Vagina (tissue), 2 donors: ENCODE measurements at regions of chr20 and their contacts with region 1.

Region 1: DNA sequence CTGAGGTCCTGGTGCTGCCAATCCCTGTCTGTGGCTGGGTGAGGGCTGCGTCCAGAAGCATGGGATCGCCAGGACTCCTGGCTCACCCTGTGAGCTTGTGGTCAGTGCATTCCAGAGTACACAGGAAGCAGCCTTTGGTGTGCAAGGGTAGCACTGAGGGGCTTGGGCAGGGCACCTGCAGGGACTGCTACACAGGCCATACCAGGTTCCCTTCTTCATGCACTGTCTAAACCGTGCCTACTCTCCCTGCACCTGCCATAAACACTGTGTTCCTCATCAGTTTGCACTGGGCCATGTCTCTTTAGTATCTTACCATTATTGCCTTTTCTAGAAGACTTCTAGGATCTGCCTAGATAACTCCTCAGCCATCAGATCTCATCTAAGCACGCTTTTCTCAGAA is 72.8 kb upstream of the NKX2-2 start:
- DNase-seq: no peak
- H3K4me3 ChIP-seq: no peak overlapping the region
- H3K27ac ChIP-seq: no peak overlapping the region
- H3K4me1 ChIP-seq: no peaks in the 10 kb centered on the region
- H3K27me3 ChIP-seq: no peaks in the 10 kb centered on the region
- CTCF ChIP-seq: no peak
- POLR2A ChIP-seq: no peak

Region 2: DNA sequence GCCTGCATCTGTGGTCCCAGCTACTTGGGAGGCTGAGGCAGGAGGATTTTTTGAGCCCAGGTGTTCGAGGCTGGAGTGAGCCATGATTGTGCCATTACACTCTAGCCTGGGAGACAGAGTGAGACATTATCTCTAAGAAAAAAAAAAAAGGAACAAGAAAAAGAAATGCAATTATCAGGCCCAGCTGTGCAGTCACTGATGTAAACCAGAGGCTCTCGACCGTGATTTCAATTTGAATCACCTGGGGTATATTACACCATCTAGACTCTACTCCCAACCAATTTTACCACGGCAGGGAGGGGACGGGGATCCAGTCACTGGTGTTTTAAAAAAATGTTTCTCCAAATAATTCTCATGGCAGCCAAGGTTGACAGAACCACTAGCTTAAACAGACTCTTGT is 24.0 kb before region 1 on chr20:
- intact Hi-C with region 1: loop called (anchors 1 kb)
- DNase-seq: no peak
- H3K4me3 ChIP-seq: no peak overlapping the region
- H3K27ac ChIP-seq: no peak overlapping the region
- H3K4me1 ChIP-seq: no peaks in the 10 kb centered on the region
- H3K27me3 ChIP-seq: no peaks in the 10 kb centered on the region
- CTCF ChIP-seq: no peak
- POLR2A ChIP-seq: no peak